Lower leg skin (tissue), 4 donors: ENCODE measurements at regions of chr12 and their contacts with region 1.

Region 1: DNA sequence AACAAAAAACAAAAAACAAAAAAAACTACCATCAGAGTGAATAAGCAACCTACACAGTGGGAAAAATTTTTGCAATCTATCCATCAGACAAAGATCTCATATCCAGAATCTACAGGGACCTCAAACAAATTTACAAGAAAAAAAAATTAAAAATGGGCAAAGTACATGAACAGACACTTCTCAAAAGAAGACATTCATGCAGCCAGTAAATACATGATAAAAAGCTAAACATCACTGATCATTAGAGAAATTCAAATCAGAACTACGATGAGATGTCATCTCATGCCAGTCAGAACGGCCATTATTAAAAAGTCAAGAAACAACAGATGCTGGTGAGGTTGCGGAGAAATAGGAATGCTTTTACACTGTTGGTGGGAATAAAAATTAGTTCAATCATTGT is 466.5 kb upstream of the ATXN7L3B start:
- DNase-seq: no peak
- H3K4me3 ChIP-seq: no peak overlapping the region
- CTCF ChIP-seq: no peak
- POLR2A ChIP-seq: no peak

Region 2: GRCh38 chr12:74105434-74105833 is 34.3 kb after region 1 on chr12:
- intact Hi-C with region 1: no loop called
- DNase-seq: no peak
- H3K4me3 ChIP-seq: no peak overlapping the region
- CTCF ChIP-seq: no peak
- POLR2A ChIP-seq: no peak

Region 3: GRCh38 chr12:74152370-74152769 is 81.2 kb after region 1 on chr12:
- intact Hi-C with region 1: loop called (anchors 2 kb)
- DNase-seq: no peak
- H3K4me3 ChIP-seq: no peak overlapping the region
- CTCF ChIP-seq: no peak
- POLR2A ChIP-seq: no peak

Region 4: GRCh38 chr12:74671421-74671820 is 600.2 kb after region 1 on chr12:
- intact Hi-C with region 1: no loop called
- DNase-seq: no peak
- H3K4me3 ChIP-seq: no peak overlapping the region
- CTCF ChIP-seq: no peak
- POLR2A ChIP-seq: no peak